ENCODE measurements at regions of chr5 and their contacts with region 1.

Region 1: DNA sequence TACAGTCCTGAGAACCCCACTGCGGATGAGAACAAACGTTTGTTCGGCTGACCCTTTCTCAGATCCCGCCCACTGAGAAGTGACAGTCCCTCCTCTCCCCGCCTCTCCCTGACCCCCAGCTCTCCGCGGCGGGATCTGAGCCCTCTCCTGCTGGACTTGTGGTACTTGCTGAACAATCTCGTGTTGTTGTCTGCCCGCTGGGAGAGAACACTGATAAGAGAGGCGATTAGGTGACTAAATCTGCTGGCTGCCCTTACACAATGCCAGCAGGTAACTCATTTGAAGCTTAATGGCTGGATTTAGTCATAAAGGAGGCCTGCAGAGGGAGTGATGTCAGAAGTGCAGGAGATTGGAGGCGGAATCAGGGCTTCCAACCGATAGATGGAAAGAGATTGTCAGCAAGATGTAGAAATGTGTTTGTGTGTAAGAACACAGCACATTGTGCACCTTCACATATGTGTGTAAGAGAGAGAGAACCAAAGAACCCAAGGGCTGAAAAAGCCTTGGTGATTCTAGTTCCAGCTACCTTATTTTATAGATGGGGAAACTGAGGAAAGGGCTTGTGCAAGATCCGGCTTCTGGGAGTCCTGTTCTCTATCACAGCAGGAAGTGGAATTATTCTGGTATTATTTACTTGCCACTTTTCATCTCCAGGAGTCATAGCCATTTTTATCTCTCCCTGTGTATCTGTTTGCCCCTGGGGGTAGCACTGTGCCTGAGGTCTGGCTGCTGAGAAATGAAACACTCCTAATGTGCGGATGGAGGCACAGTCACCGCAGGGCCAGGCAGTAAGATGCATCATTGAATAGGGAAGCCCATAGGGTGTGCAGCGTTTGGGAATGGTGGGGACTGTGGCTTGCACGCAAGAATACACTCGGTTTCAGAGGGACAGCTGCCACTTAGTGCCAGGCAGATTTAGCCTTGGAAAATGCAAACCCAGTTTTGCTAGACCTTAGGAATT is 203.7 kb upstream of the MSX2 start:
- DNase-seq: peak; percentile 94 to 97
- H3K4me3 ChIP-seq: no peak overlapping the region
- H3K4me3 Mint-ChIP-seq: peak overlapping the region; percentile 57
- H3K27ac Mint-ChIP-seq: peak overlapping the region; percentile 80
- H3K4me1 ChIP-seq: peaks cover 54% of the 10 kb centered on the region
- H3K4me1 Mint-ChIP-seq: peaks cover 39% of the 10 kb centered on the region
- H3K27me3 ChIP-seq: no peaks in the 10 kb centered on the region
- H3K27me3 Mint-ChIP-seq: no peaks in the 10 kb centered on the region
- CTCF ChIP-seq: peak in 1 of 2 experiments; percentile 32

Region 2: GRCh38 chr5:174273325-174273724 is 247.4 kb before region 1 on chr5:
- CTCF ChIA-PET with region 1: no interaction called
- POLR2A ChIA-PET with region 1: no interaction called
- intact Hi-C with region 1: no loop called
- DNase-seq: no peak
- H3K4me3 ChIP-seq: no peak overlapping the region
- H3K4me3 Mint-ChIP-seq: no peak overlapping the region
- H3K27ac Mint-ChIP-seq: no peak overlapping the region
- H3K4me1 ChIP-seq: no peaks in the 10 kb centered on the region
- H3K4me1 Mint-ChIP-seq: no peaks in the 10 kb centered on the region
- H3K27me3 ChIP-seq: peaks cover 1% of the 10 kb centered on the region
- H3K27me3 Mint-ChIP-seq: peaks cover 13% of the 10 kb centered on the region
- CTCF ChIP-seq: no peak

Region 3: GRCh38 chr5:174338185-174339010 is 182.3 kb before region 1 on chr5:
- CTCF ChIA-PET with region 1: no interaction called
- POLR2A ChIA-PET with region 1: no interaction called
- intact Hi-C with region 1: loop called (anchors 5 kb)
- DNase-seq: peak; percentile 26 to 75
- H3K4me3 ChIP-seq: no peak overlapping the region
- H3K4me3 Mint-ChIP-seq: peak overlapping the region; percentile 58
- H3K27ac Mint-ChIP-seq: peak overlapping the region; percentile 82
- H3K4me1 ChIP-seq: peaks cover 25% of the 10 kb centered on the region
- H3K4me1 Mint-ChIP-seq: peaks cover 38% of the 10 kb centered on the region
- H3K27me3 ChIP-seq: no peaks in the 10 kb centered on the region
- H3K27me3 Mint-ChIP-seq: no peaks in the 10 kb centered on the region
- CTCF ChIP-seq: no peak

Region 4: DNA sequence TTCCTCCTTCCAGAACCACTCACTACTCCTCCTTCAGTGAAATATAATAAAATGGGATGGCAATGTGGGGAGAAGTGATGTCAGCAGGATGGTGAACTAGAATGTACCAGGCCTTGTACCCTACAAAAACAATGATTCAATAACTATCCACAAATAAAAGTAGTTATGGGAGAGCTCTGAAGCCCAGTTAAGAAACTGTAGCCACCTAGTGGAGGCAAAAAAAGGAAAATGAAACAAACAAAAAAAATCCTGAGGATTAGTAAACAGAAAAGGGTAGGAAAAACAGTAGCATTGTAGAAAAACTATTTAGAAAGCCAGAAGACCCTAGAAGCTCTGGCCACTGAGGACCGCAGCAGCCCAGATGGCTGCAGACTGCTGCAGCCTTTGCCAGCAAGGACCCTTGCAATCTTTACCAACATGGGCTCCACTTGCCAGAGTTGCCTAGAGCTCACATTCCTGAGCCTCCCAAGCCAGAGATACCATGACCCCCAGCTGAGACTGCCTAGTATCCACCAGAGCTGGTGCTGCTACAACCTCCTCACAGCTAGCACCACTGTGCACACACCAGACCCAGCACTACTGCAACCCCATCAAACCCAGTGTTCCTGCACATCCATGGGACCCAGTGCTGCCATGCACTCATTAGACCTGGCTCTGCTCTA is 56.1 kb before region 1 on chr5:
- CTCF ChIA-PET with region 1: interaction called, 5 read pairs
- POLR2A ChIA-PET with region 1: no interaction called
- intact Hi-C with region 1: loop called (anchors 2 kb)
- DNase-seq: no peak
- H3K4me3 ChIP-seq: no peak overlapping the region
- H3K4me3 Mint-ChIP-seq: no peak overlapping the region
- H3K27ac Mint-ChIP-seq: no peak overlapping the region
- H3K4me1 ChIP-seq: peaks cover 44% of the 10 kb centered on the region
- H3K4me1 Mint-ChIP-seq: peaks cover 35% of the 10 kb centered on the region
- H3K27me3 ChIP-seq: no peaks in the 10 kb centered on the region
- H3K27me3 Mint-ChIP-seq: no peaks in the 10 kb centered on the region
- CTCF ChIP-seq: peak; percentile 32 to 51

Region 5: DNA sequence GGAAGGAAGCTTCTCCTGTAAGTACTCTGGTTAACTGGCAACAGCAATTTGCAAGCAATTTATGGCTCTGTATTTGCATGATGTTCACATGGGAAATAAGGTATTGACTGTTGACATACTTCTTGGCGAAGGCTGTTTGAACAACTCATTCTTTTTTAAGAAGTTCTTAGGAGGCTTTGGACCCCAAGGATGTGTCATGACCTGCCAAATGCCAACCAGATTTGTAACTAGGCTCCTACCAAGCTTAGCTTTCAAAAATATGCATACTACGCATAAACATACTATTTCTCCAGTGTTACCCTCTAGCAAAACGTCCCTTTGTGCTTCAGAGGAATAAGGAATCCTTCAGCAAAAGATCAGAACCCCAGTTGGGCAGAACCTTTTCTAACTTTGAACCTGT is 38.4 kb after region 1 on chr5:
- CTCF ChIA-PET with region 1: interaction called, 3 read pairs
- POLR2A ChIA-PET with region 1: no interaction called
- intact Hi-C with region 1: loop called (anchors 5 kb)
- DNase-seq: no peak
- H3K4me3 ChIP-seq: no peak overlapping the region
- H3K4me3 Mint-ChIP-seq: no peak overlapping the region
- H3K27ac Mint-ChIP-seq: no peak overlapping the region
- H3K4me1 ChIP-seq: peaks cover 20% of the 10 kb centered on the region
- H3K4me1 Mint-ChIP-seq: peaks cover 7% of the 10 kb centered on the region
- H3K27me3 ChIP-seq: no peaks in the 10 kb centered on the region
- H3K27me3 Mint-ChIP-seq: no peaks in the 10 kb centered on the region
- CTCF ChIP-seq: no peak

Region 6: GRCh38 chr5:174618032-174618324 is 97.3 kb after region 1 on chr5:
- CTCF ChIA-PET with region 1: interaction called, 3 read pairs
- POLR2A ChIA-PET with region 1: no interaction called
- intact Hi-C with region 1: loop called (anchors 5 kb)
- DNase-seq: peak in 1 of 2 experiments; percentile 44
- H3K4me3 ChIP-seq: no peak overlapping the region
- H3K4me3 Mint-ChIP-seq: peak overlapping the region; percentile 4
- H3K27ac Mint-ChIP-seq: peak overlapping the region; percentile 63
- H3K4me1 ChIP-seq: peaks cover 76% of the 10 kb centered on the region
- H3K4me1 Mint-ChIP-seq: peaks cover 64% of the 10 kb centered on the region
- H3K27me3 ChIP-seq: no peaks in the 10 kb centered on the region
- H3K27me3 Mint-ChIP-seq: no peaks in the 10 kb centered on the region
- CTCF ChIP-seq: no peak

Region 7: GRCh38 chr5:174724491-174725260 is 204.0 kb after region 1 on chr5 and contains the start of gene MSX2:
- CTCF ChIA-PET with region 1: interaction called, 4 read pairs
- POLR2A ChIA-PET with region 1: interaction called, 3 read pairs
- intact Hi-C with region 1: loop called (anchors 5 kb)
- DNase-seq: peak; percentile 93 to 95
- H3K4me3 ChIP-seq: peak within 1 kb of the TSS; percentile 94
- H3K4me3 Mint-ChIP-seq: peak within 1 kb of the TSS; percentile 93
- H3K27ac Mint-ChIP-seq: peak within 1 kb of the TSS; percentile 91
- H3K4me1 ChIP-seq: peaks cover 54% of the 10 kb centered on the region
- H3K4me1 Mint-ChIP-seq: peaks cover 45% of the 10 kb centered on the region
- H3K27me3 ChIP-seq: no peaks in the 10 kb centered on the region
- H3K27me3 Mint-ChIP-seq: no peaks in the 10 kb centered on the region
- CTCF ChIP-seq: no peak
- total RNA-seq, gene MSX2: 59.7 and 64.4 TPM in 2 replicates

Region 8: DNA sequence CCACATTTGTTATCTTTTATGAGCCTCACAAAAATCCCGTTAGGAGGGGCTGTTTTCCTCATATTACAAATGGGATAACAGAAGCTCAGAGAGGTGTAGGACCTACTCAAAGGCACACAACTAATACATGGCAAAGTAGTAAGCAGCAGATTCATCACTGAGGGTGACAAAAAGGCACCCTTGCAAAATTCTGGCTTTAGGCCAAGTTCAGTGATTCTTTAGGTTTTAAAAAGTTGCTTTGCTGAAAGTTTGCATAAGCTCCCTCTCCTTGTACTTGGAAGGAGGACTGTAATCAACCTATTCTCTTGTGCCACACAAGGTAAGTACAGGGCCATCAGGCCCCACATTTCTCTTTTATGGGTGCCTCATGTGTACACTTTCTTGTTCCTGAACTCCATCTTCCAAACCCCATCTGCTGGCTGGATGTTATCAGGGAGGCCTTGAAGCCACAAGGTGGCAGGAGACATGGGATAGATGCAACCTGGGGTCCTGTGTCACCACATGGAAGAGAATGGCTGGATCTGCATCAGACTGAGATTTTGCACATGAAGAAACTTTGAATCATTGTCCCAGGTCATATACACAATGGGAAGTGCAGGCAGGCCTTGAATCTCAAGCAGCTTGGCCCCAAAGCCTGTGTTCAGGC is 515.3 kb after region 1 on chr5:
- CTCF ChIA-PET with region 1: no interaction called
- POLR2A ChIA-PET with region 1: no interaction called
- intact Hi-C with region 1: no loop called
- DNase-seq: peak in 1 of 2 experiments; percentile 15
- H3K4me3 ChIP-seq: no peak overlapping the region
- H3K4me3 Mint-ChIP-seq: no peak overlapping the region
- H3K27ac Mint-ChIP-seq: no peak overlapping the region
- H3K4me1 ChIP-seq: no peaks in the 10 kb centered on the region
- H3K4me1 Mint-ChIP-seq: no peaks in the 10 kb centered on the region
- H3K27me3 ChIP-seq: no peaks in the 10 kb centered on the region
- H3K27me3 Mint-ChIP-seq: peaks cover 6% of the 10 kb centered on the region
- CTCF ChIP-seq: peak in 1 of 2 experiments; percentile 29

Measured in Caco-2 (cell line).